ENCODE measurements at regions of chr7 and their contacts with region 1.

Region 1: DNA sequence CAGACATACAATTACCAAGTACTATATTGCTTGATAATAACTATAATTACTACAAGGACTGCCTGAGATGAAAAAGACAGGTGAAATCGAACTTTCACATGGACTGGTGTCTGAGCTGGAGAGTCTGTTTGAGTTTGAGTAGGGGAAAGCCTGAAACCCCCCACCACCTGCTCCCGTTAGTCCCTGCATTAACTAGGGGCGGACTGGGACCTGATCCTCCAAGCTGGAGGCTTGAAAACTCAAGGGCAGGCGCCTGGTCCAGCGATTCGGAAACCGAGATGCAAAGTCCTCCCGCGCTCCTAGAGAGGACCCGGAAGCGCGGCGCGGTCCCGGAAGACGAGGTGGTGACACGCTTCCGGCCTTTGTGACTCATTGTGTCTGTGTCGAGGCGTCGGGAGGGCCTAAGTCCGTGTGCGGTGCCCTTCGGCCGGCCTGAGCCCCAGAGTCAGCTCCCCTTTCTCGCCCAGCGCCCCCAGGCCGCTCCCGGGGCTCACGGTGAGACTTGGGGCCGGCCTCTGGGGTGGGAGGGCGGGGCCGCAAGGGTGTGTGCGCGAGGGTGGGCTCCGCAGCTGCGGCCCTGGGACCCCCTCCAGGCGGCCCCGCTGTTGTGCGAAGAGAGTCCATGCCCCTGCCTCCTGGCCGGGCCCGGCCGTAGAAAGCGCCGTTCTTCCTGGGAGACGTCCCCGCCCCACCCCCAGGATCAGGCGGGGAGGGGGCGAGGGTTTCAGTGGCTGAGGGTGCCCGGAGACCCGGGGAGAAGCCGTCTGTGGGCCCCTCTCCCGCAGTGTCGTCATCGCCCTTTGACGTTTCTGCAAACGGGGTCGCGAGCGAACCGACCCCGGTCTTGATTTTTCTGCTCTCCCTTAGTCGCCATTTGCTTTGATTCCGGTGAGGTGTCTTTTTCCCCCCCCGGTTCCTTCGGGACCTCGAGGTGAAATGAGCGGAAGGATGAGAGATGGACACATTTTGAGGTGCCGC is at the start of gene ZKSCAN1:
- DNase-seq: peak; percentile 56
- ATAC-seq: peak; percentile 98
- H3K4me3 ChIP-seq: peak within 1 kb of the TSS; percentile 92
- H3K27ac ChIP-seq: peak within 1 kb of the TSS; percentile 90
- H3K4me1 ChIP-seq: peaks cover 4% of the 10 kb centered on the region; the same call in 1 of the 2 replicates
- H3K27me3 ChIP-seq: no peaks in the 10 kb centered on the region
- CTCF ChIP-seq: no peak
- EP300 ChIP-seq: no peak
- POLR2A ChIP-seq: peak; percentile 98
- RAD21 ChIP-seq: no peak
- polyA plus RNA-seq, gene ZKSCAN1: 3.2 to 4.6 TPM

Region 2: DNA sequence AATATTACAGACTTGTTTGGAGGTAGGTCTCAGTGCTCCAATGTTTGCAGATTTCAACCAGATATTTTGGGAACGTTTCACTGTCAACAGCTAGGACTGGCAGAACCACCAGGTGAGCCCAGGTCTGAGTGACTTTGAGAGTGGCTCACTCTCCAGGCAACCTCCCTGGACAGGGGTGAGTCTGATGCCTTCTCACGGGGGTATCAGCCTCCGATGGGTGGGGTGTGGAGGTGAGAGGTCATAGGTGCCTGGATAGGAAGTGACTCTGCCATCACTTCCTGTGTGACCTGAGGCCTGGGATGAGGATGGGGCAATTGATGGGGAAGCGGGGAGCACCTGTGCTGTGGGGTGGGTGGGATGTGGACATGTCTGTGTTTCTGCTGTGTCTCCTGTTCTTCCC is 44.3 kb before region 1 on chr7:
- CTCF ChIA-PET with region 1: no interaction called
- POLR2A ChIA-PET with region 1: no interaction called
- RAD21 ChIA-PET with region 1: no interaction called
- SMC1A ChIA-PET with region 1: no interaction called
- in situ Hi-C with region 1: no loop called
- intact Hi-C with region 1: no loop called
- DNase-seq: no peak
- ATAC-seq: no peak
- H3K4me3 ChIP-seq: no peak overlapping the region
- H3K27ac ChIP-seq: no peak overlapping the region
- H3K4me1 ChIP-seq: no peaks in the 10 kb centered on the region
- H3K27me3 ChIP-seq: no peaks in the 10 kb centered on the region
- CTCF ChIP-seq: no peak
- EP300 ChIP-seq: no peak
- POLR2A ChIP-seq: no peak
- RAD21 ChIP-seq: no peak

Region 3: DNA sequence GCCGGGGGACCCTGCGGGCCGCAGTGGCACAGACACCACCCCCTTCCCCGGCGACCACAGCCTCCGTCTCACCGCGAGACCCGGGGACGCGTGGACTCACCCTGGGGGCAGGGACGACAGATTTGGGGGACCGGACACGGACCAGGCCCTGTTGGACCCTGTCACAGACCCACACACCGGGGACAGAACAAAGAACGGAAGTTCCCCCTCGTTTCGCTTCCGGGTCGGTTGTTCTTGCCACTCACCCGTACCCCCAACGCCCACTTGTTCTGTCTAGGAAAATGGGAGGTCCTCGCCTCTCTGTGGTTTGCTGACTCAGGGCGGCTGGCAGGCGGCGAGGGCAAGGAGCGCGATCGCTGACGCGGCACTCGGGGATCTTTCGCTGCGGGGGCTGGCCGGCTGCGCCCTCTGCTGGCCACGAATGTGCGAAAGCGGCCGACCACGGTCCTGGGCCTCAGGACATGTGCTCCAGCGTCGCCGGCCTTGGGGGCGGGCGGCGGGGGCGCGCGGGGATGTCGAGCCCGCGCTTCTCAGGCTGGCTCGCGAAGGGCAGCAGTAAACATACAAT is 66.1 kb after region 1 on chr7 and contains the start of gene ZNF3:
- CTCF ChIA-PET with region 1: interaction called, 5 read pairs
- POLR2A ChIA-PET with region 1: no interaction called
- RAD21 ChIA-PET with region 1: interaction called, 6 read pairs
- SMC1A ChIA-PET with region 1: no interaction called
- in situ Hi-C with region 1: no loop called
- intact Hi-C with region 1: loop called (anchors 5 kb)
- DNase-seq: peak; percentile 97
- ATAC-seq: peak; percentile 90
- H3K4me3 ChIP-seq: peak within 1 kb of the TSS; percentile 88
- H3K27ac ChIP-seq: peak within 1 kb of the TSS; percentile 89
- H3K4me1 ChIP-seq: peaks cover 4% of the 10 kb centered on the region
- H3K27me3 ChIP-seq: no peaks in the 10 kb centered on the region
- CTCF ChIP-seq: peak; percentile 84 to 97 (median 89); a peak in 5 of 6 replicates
- EP300 ChIP-seq: peak in 1 of 2 experiments; percentile 60; a peak in 1 of 4 replicates
- POLR2A ChIP-seq: peak; percentile 96
- RAD21 ChIP-seq: peak; percentile 66
- polyA plus RNA-seq, gene ZNF3: 17.2 to 19.0 TPM

Measured in GM12878 (cell line).